ENCODE measurements at regions of chr10 and their contacts with region 1.

Region 1: DNA sequence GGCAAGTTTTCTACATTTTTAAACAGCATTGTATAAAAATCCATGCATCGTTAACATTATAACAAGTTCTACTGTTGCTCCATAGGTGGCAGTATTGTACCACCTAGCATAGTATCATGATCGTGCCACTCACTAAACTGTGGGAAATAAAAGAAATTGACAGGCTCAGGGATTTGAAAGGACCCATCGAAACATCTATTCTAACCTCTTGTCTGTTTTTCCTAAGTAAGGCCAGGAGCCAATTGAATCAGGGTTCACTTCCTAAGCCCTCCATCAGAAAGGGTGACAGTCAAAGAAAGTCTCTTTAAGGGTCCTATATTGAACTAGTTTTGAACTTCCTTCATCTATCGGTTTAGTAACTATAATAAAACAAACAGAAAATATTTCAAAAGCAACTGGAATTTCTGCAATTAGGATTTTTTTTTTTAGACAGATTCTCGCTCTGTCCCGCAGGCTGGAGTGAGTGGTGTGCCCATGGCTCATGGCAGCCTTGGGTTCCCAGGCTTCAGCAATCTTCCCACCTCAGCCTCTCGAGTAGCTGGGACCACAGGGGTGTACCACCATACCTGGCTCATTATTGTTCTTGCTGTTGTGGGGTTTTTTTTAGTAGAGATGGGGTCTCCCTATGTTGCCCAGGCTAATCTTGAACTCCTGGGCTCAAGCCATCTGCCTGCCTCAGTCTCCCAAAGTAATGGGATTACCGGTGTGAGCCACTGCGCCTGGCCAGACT is 9.4 kb downstream of the HACD1 start:
- DNase-seq: no peak
- ATAC-seq: peak; percentile 77 to 85

Region 2: DNA sequence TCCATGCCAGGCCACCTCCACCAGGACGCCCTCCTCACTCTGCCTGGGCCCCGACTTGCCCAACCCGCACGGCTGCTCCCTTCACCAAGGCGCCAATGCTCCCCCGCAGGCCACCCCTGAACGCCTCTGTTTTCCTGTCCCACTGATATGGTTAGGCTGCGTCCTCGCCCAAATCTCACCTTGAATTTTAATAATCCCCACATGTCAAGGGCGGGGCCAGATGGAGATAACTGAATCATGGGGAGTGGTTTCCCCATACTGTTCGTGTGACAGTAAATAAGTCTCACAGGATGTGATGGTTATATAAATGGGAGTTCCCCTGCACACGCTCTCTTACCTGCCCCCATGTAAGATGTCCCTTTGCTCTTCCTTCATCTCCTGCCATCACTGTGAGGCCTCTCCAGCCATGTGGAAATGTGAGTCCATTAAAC is 820.4 kb before region 1 on chr10:
- intact Hi-C with region 1: no loop called
- DNase-seq: no peak
- ATAC-seq: no peak

Region 3: DNA sequence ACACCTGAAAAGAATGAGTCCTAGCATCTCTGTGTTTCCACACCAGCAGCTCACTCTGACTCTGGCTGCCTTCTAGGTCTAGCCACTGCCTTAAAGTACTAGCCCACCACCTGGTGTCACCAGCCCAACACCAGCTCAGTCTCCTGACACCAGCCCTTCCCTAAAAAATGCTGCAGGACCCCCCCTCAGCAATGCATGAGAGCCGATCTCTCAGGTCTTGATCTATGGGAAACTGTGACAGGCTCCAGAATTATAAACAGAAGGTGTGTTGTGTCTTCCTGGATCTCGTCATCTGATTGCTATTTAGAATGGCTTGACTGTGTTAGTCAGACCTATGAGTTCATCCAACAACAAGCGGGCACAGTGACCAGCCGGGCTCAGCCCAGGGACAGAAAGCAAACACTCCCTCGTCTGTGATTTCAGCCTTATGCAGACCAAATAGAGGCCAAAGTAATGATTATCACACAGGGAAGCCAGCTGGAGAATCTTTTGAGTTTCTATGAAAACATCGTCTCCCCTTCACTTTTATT is 544.7 kb before region 1 on chr10:
- intact Hi-C with region 1: no loop called
- DNase-seq: peak; percentile 40
- ATAC-seq: peak in 1 of 2 donors; percentile 92

Region 4: GRCh38 chr10:17655567-17656146 is 47.9 kb after region 1 on chr10:
- intact Hi-C with region 1: no loop called
- DNase-seq: no peak
- ATAC-seq: peak in 1 of 2 donors; percentile 27

Region 5: GRCh38 chr10:17742918-17743317 is 135.2 kb after region 1 on chr10:
- intact Hi-C with region 1: loop called in 1 of 2 experiments (anchors 2 kb)
- DNase-seq: peak; percentile 68
- ATAC-seq: peak in 1 of 2 donors; percentile 16

Region 6: DNA sequence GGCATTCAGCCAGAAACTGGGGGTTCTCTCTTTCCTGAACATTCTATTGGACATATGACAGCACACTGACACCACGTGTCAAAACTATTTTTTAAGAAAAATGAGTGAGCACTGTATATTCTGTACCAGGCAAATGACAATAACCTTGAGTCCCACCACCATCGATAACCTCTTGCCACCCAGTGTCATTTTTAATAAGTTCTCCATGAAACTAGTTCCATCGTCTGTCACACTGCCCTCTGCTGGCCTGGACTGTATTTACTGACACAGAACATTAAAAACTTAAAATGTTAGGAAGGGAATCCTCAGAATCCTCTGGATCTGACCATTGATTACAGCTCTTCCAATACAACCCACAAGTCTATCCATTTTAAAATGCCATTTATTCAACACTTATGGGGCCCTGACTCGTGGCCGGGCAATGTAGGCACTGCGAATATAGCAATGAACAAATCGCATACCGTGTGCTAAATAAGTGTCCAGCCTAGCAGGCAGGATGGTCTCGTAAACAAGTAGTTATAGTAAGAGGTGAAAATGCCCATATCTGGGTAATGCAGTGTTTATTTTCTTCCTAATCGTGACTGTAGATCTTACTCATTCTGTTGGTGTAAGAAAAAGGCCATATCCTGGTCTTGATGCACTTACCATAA is 496.6 kb after region 1 on chr10:
- intact Hi-C with region 1: loop called in 1 of 2 experiments (anchors 10 kb)
- DNase-seq: peak; percentile 63
- ATAC-seq: no peak

Region 7: GRCh38 chr10:18238870-18239485 is 631.2 kb after region 1 on chr10:
- intact Hi-C with region 1: loop called in 1 of 2 experiments (anchors 10 kb)
- DNase-seq: no peak
- ATAC-seq: peak in 1 of 2 donors; percentile 33